WTC11 (cell line): ENCODE measurements at regions of chr5 and their contacts with region 1.

Region 1: DNA sequence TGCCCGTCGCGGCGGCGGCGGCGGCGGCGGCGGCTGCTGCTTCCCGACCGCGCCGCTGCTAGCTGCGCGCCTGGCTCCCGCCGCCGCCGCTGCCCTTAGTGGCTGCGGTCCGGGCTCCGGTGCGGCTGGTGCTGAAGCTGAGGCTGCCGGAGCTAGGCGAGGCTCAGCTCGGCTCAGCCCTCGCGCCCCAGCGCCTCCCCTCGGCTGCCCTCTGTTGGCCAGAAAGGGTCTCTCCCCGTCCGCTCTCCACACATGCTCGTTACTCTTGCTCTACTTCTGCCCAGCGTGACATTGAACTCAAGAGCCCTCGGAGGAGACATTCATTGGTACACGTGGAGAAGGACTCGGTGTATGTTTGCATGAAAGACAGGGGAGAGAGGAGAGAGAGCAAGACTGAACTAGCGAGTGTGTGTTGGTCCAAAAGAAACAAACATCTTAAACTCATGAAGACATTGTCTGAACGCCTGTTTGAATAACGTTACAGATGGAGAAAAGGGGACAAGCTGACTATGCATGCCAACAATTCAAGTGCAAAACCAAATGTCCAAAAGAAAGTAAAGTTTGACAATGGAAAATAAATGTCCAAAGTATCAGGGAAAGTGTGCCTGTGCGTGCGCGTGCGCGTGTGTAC is at the start of gene HCN1:
- DNase-seq: peak; percentile 91
- ATAC-seq: peak; percentile 94
- H3K4me3 Mint-ChIP-seq: peak within 1 kb of the TSS; percentile 72
- H3K27ac Mint-ChIP-seq: no peak within 1 kb of the TSS
- H3K4me1 Mint-ChIP-seq: peaks cover 31% of the 10 kb centered on the region
- H3K27me3 Mint-ChIP-seq: peaks cover 27% of the 10 kb centered on the region
- CTCF ChIP-seq: peak; percentile 71
- total RNA-seq, gene HCN1: 2.0 to 6.9 TPM (median 2.2 TPM) in 3 replicates

Region 2: GRCh38 chr5:45680950-45681349 is 15.4 kb before region 1 on chr5:
- CTCF ChIA-PET with region 1: interaction called, 15 read pairs
- POLR2A ChIA-PET with region 1: no interaction called
- DNase-seq: no peak
- ATAC-seq: peak; percentile 60; the same call in 1 of the 2 replicates
- H3K4me3 Mint-ChIP-seq: no peak overlapping the region
- H3K27ac Mint-ChIP-seq: no peak overlapping the region
- H3K4me1 Mint-ChIP-seq: peaks cover 26% of the 10 kb centered on the region
- H3K27me3 Mint-ChIP-seq: no peaks in the 10 kb centered on the region
- CTCF ChIP-seq: no peak

Region 3: GRCh38 chr5:45774528-45774927 is 78.2 kb after region 1 on chr5:
- CTCF ChIA-PET with region 1: interaction called, 20 read pairs
- POLR2A ChIA-PET with region 1: no interaction called
- DNase-seq: no peak
- ATAC-seq: no peak
- H3K4me3 Mint-ChIP-seq: no peak overlapping the region
- H3K27ac Mint-ChIP-seq: no peak overlapping the region
- H3K4me1 Mint-ChIP-seq: no peaks in the 10 kb centered on the region
- H3K27me3 Mint-ChIP-seq: peaks cover 2% of the 10 kb centered on the region; the same call in 1 of the 2 replicates
- CTCF ChIP-seq: no peak